Heart right ventricle (tissue), 16 donors: ENCODE measurements at regions of chr1 and their contacts with region 1.

Region 1: DNA sequence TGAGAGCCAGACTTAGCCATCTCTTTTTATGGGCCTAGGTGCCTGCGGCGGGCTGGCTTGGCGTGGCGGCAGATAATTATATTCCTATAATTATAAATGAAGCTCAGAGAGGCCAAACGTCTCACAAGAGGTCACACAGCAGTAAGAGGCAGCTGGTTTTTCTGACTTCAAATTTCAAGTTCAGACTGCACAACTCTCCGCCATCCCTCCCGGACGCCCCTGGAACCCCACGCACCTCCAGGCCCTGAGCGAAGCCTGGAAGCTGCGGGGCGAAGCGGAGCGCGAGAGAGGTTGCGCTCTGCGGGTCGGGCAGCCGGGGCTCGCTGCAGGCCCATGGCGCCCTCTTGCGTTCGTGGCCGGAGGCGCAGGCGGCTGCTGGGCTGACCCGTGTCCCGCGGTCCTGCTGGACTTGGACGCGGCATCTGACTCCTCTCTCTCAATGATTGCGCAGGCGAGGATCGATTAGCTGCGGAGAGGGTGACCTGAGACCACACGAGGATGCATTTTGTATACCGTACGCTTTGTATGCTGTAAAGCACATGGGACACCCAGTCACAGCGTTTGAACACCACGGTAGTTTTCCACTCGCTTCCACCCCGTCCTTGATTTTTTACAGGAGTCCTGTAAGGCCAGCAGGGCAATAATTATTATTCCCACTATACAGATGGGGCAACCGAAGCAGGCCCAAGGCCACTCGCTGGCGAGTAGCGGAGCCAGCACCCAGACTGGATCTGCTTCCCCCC is 272.7 kb downstream of the FOXD2 start:
- DNase-seq: peak; percentile 62 to 83
- ATAC-seq: peak; percentile 86 to 93 (median 90)
- H3K4me3 ChIP-seq: peak overlapping the region in 9 of 10 donors; percentile 33 to 52 (median 49)
- H3K27ac ChIP-seq: no peak overlapping the region
- H3K4me1 ChIP-seq: peaks cover 6 to 30% (median 24%) of the 10 kb centered on the region in 9 donors
- H3K27me3 ChIP-seq: peaks cover 21 to 100% (median 98%) of the 10 kb centered on the region in 7 donors
- CTCF ChIP-seq: peak; percentile 94 to 100 (median 99)

Region 2: GRCh38 chr1:47388891-47389238 is 321.6 kb before region 1 on chr1:
- intact Hi-C with region 1: loop called in 2 of 10 experiments (anchors 5 kb)
- DNase-seq: peak; percentile 25 to 36
- ATAC-seq: peak in 7 of 8 donors; percentile 46 to 84 (median 71)
- H3K4me3 ChIP-seq: no peak overlapping the region
- H3K27ac ChIP-seq: no peak overlapping the region
- H3K4me1 ChIP-seq: peaks cover 0 to 10% (median 0%) of the 10 kb centered on the region in 9 donors
- H3K27me3 ChIP-seq: peaks cover 0 to 8% (median under 1%) of the 10 kb centered on the region in 7 donors
- CTCF ChIP-seq: peak; percentile 13 to 75 (median 63)

Region 3: GRCh38 chr1:47432071-47433036 is 278.1 kb before region 1 on chr1:
- intact Hi-C with region 1: loop called (anchors 1 to 5 kb)
- DNase-seq: peak; percentile 58 to 78
- ATAC-seq: peak; percentile 57 to 85 (median 82)
- H3K4me3 ChIP-seq: peak overlapping the region in 4 of 10 donors; percentile 16 to 26 (median 20)
- H3K27ac ChIP-seq: peak overlapping the region in 1 of 10 donors; percentile 44
- H3K4me1 ChIP-seq: peaks cover 10 to 50% (median 40%) of the 10 kb centered on the region in 9 donors
- H3K27me3 ChIP-seq: peaks cover 18 to 100% (median 92%) of the 10 kb centered on the region in 7 donors
- CTCF ChIP-seq: peak; percentile 20 to 88 (median 77)

Region 4: GRCh38 chr1:47437447-47438164 is 272.9 kb before region 1 on chr1 and contains the start of gene FOXD2:
- intact Hi-C with region 1: loop called (anchors 1 to 5 kb)
- DNase-seq: peak; percentile 83 to 88
- ATAC-seq: peak; percentile 92 to 95 (median 94)
- H3K4me3 ChIP-seq: peak within 1 kb of the TSS; percentile 46 to 87 (median 70)
- H3K27ac ChIP-seq: peak within 1 kb of the TSS in 9 of 10 donors; percentile 36 to 94 (median 74)
- H3K4me1 ChIP-seq: peaks cover 9 to 49% (median 36%) of the 10 kb centered on the region in 9 donors
- H3K27me3 ChIP-seq: peaks cover 23 to 99% (median 94%) of the 10 kb centered on the region in 7 donors
- CTCF ChIP-seq: peak; percentile 95 to 99 (median 98)
- total RNA-seq, gene FOXD2: 0.05 to 0.14 (median 0.07) TPM in 4 of 10 donors, not detected in the others

Region 5: DNA sequence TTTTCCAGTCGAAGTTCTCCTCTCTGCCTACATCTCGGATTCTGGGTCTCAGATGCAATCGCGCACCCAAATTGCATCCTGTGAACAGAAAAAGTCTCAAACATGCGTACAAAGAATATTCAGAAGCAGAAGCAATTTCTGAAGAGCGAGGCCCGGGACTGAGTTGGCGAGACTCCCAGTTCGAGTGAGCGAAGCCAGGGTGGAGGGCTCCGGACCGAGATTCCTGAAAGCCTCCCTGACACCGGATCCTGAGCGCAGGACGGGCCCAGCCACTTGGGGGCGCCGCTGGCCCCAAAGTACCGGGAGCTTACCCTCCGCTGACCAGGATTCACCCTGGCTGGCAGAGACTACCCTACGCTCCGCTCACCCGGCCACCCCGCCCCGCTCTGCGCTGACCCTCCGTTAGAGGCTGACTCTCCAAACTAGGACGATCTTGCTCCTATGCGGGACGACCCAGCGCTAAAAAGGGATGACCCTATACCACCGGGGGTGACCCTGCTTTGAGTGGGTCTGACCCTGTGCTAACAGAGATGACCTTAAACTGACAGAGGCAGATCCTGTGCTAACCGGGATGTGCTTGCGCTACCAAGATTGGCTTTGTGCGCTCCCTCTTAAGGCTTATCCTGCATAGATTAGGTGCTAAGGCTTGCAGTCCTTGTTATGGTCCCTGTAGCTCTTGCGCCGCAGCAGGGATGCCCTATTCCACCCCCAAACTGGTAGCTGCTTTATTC is 260.5 kb before region 1 on chr1:
- intact Hi-C with region 1: loop called in 2 of 10 experiments (anchors 5 kb)
- DNase-seq: peak in 1 of 2 donors; percentile 40
- ATAC-seq: peak in 7 of 8 donors; percentile 48 to 73 (median 64)
- H3K4me3 ChIP-seq: no peak overlapping the region
- H3K27ac ChIP-seq: no peak overlapping the region
- H3K4me1 ChIP-seq: peaks cover 1 to 10% (median 2%) of the 10 kb centered on the region in 9 donors
- H3K27me3 ChIP-seq: peaks cover 19 to 99% (median 96%) of the 10 kb centered on the region in 7 donors
- CTCF ChIP-seq: peak; percentile 13 to 62 (median 49)

Region 6: GRCh38 chr1:47527658-47528255 is 182.7 kb before region 1 on chr1:
- intact Hi-C with region 1: loop called (anchors 2 to 10 kb)
- DNase-seq: no peak
- ATAC-seq: peak in 1 of 8 donors; percentile 61
- H3K4me3 ChIP-seq: no peak overlapping the region
- H3K27ac ChIP-seq: no peak overlapping the region
- H3K4me1 ChIP-seq: peaks cover 0 to 6% (median 2%) of the 10 kb centered on the region in 9 donors
- H3K27me3 ChIP-seq: peaks cover 0 to 36% (median 22%) of the 10 kb centered on the region in 7 donors
- CTCF ChIP-seq: peak in 8 of 9 donors; percentile 14 to 59 (median 47)

Region 7: DNA sequence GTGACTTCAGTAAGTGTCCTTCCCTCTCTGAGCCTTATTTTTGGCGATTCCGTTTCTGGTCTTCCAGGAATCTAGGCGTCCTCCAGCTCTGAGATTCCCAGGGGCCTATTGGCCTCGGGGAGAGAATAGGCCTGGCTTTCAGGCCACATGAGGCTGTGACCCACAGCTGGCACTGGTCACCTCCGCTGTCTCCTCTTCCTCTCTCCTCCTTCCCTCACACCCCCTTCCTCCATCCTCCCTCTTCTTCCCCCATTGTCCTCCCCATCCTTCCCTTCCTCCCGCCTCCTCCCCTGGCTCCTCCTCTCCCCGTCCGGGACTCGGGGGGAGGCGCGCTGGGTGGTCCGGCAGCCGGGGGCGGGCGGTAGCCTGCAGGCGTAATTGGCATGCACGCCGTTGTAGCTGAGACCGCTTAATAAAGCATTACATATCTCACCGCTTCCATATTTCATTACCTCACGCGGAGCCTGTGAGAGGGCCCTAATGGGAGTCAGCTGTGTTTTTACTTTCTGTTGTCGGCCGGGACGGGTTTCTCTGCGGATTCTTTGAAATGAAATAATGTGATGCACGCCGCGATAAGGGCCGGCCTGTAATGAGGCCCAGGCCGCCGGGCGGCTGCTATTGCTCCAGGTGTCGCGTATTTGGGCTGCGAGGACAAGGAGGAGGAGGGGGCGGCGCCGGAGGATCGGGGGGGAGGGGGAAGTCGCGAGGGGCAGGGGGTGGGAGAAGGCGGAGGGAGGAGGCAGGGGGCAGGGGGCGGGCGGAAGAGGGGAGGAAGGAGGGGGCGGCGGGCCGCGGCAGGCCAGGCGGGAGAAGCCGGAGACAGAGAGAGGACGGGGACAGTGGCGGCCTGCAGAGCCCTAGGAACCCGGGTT is 177.3 kb before region 1 on chr1:
- intact Hi-C with region 1: loop called in 9 of 10 experiments (anchors 2 to 10 kb)
- DNase-seq: peak; percentile 56 to 65
- ATAC-seq: peak; percentile 65 to 87 (median 82)
- H3K4me3 ChIP-seq: peak overlapping the region in 9 of 10 donors; percentile 34 to 63 (median 50)
- H3K27ac ChIP-seq: peak overlapping the region in 7 of 10 donors; percentile 0 to 62 (median 43)
- H3K4me1 ChIP-seq: peaks cover 4 to 36% (median 18%) of the 10 kb centered on the region in 9 donors
- H3K27me3 ChIP-seq: peaks cover 0 to 39% (median 1%) of the 10 kb centered on the region in 7 donors
- CTCF ChIP-seq: no peak

Region 8: GRCh38 chr1:47569681-47570470 is 140.6 kb before region 1 on chr1:
- intact Hi-C with region 1: no loop called
- DNase-seq: peak in 1 of 2 donors; percentile 42
- ATAC-seq: peak; percentile 61 to 92 (median 77)
- H3K4me3 ChIP-seq: no peak overlapping the region
- H3K27ac ChIP-seq: no peak overlapping the region
- H3K4me1 ChIP-seq: peaks cover 0 to 17% (median 8%) of the 10 kb centered on the region in 9 donors
- H3K27me3 ChIP-seq: peaks cover 0 to 28% (median 0%) of the 10 kb centered on the region in 7 donors
- CTCF ChIP-seq: peak in 7 of 9 donors; percentile 42 to 68 (median 46)

Region 9: DNA sequence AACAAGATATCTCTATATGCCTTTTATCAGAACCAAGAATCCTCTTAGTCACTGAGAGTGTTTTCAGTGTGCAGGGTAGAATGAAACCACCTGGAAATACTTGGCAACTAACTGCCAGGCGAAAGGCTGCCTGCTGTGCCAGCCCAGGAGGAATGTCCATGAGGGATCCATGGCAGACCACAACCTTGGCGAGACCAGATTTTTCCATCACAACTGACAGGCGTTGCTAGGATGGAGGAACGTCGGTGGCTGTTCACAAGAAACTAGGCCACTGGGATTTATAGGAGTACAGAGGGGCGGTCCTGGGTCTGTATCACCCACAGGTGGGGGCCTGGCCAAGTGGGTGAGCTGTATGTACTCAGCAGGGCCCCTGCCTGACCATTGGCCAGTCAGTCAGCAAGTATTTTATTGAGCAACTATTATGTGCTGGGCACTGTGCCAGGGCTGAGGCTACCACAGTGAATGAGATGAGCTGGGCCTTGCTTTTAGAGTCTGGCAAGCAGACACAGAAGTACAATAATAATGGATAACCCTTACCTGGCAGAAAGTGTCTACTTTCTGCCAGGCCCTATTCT is 73.3 kb before region 1 on chr1:
- intact Hi-C with region 1: no loop called
- DNase-seq: no peak
- ATAC-seq: no peak
- H3K4me3 ChIP-seq: no peak overlapping the region
- H3K27ac ChIP-seq: no peak overlapping the region
- H3K4me1 ChIP-seq: no peaks in the 10 kb centered on the region
- H3K27me3 ChIP-seq: peaks cover 0 to 61% (median 6%) of the 10 kb centered on the region in 7 donors
- CTCF ChIP-seq: no peak

Region 10: DNA sequence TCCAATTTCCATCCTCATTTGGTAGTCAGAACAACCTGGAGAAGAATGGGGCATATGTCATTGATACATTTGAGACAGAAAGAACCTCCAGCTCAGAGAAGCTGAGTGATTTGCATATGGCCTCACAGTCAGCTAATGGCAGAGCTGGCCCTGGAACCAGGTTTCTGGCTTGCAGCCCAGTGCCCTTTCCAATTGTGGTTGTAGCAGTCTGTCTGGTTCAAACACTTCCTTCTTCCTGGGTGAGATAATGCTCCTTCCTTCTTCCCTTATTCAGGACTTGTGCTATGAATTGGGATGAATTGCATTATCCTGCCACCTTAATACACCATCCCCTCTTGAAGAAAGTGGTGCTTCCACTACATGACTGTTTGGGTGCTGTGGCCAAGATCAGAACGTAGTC is 536.2 kb after region 1 on chr1:
- intact Hi-C with region 1: no loop called
- DNase-seq: peak; percentile 21 to 52
- ATAC-seq: peak in 3 of 8 donors; percentile 54 to 81 (median 61)
- H3K4me3 ChIP-seq: no peak overlapping the region
- H3K27ac ChIP-seq: no peak overlapping the region
- H3K4me1 ChIP-seq: peaks cover 0 to 49% (median 6%) of the 10 kb centered on the region in 9 donors
- H3K27me3 ChIP-seq: no peaks in the 10 kb centered on the region
- CTCF ChIP-seq: no peak